CD14-positive monocyte (primary cell): ENCODE measurements at regions of chr17 and their contacts with region 1.

Region 1: DNA sequence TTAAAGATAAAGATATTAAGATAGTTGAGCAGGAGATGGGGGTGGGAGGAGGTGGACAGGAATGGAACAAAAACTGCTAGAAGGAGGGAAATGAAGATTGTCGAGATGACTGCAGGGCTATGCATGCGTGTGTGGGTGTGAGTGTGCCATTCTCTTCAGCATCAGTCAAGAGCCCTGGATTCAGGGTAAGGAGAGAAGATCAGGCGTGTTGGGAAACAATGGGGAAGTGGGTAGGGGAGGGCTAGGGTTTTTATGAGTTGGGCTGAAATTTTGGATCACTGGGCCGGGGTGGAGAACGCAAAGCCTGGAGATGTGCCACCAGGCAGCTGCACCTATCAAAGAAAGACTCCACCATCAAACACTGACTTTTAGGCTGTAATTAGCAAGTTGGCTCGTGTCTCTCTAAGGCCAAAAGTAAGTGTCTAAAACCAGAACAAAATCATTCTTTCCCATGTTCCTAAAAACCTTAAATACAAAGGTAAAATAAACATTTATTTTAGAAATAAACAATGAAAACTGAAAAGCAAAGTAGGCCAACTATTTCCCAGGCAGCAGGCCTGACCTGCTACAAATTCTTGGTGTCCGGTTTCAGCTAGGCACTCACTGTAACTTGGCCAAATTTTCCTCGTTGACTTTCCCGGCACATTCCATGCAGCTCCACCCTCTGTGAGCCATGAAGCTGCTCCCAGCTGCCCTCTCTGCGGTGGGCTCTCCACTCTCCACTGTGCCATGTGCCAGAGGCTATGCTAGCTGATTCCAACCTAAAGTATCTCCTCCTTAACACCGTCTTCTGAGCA is 4.2 kb downstream of the CDRT4 start:
- DNase-seq: no peak
- H3K4me3 ChIP-seq: no peak overlapping the region
- H3K4me3 Mint-ChIP-seq: no peak overlapping the region
- H3K27ac ChIP-seq: no peak overlapping the region
- H3K27ac Mint-ChIP-seq: no peak overlapping the region
- H3K4me1 ChIP-seq: no peaks in the 10 kb centered on the region
- H3K4me1 Mint-ChIP-seq: no peaks in the 10 kb centered on the region
- H3K27me3 ChIP-seq: no peaks in the 10 kb centered on the region
- H3K27me3 Mint-ChIP-seq: peaks cover 0 to 3% (median 0%) of the 10 kb centered on the region in 3 donors
- CTCF ChIP-seq: no peak

Region 2: DNA sequence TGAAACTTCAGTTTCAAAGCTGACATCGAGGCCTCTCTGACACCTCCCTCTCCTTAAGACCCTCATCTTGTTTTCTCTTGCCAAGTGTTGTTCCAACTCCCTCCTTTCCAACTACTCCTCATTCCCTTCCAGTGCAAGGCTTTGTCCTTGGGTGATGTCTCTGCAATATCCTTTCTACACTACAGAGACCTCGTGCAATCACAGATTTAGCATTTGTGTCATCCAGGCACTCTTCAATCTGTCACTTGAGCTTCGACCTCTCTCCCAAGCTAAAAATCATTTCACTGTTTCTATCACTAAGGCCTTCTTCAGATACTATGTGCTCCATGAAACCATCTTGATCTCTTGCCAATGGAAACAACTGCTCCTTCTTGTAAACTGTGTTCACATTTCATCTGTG is 153.4 kb before region 1 on chr17:
- intact Hi-C with region 1: loop called in 1 of 2 experiments (anchors 5 kb)
- DNase-seq: no peak
- H3K4me3 ChIP-seq: no peak overlapping the region
- H3K4me3 Mint-ChIP-seq: no peak overlapping the region
- H3K27ac ChIP-seq: no peak overlapping the region
- H3K27ac Mint-ChIP-seq: no peak overlapping the region
- H3K4me1 ChIP-seq: no peaks in the 10 kb centered on the region
- H3K4me1 Mint-ChIP-seq: no peaks in the 10 kb centered on the region
- H3K27me3 ChIP-seq: no peaks in the 10 kb centered on the region
- H3K27me3 Mint-ChIP-seq: peaks cover under 1 to 8% (median 7%) of the 10 kb centered on the region in 3 donors
- CTCF ChIP-seq: no peak

Region 3: GRCh38 chr17:15490634-15491261 is 27.6 kb after region 1 on chr17:
- intact Hi-C with region 1: no loop called
- DNase-seq: no peak
- H3K4me3 ChIP-seq: no peak overlapping the region
- H3K4me3 Mint-ChIP-seq: no peak overlapping the region
- H3K27ac ChIP-seq: no peak overlapping the region
- H3K27ac Mint-ChIP-seq: no peak overlapping the region
- H3K4me1 ChIP-seq: no peaks in the 10 kb centered on the region
- H3K4me1 Mint-ChIP-seq: peaks cover 8% of the 10 kb centered on the region
- H3K27me3 ChIP-seq: no peaks in the 10 kb centered on the region
- H3K27me3 Mint-ChIP-seq: peaks cover 0 to 3% (median 1%) of the 10 kb centered on the region in 3 donors
- CTCF ChIP-seq: no peak